B cell (primary cell): ENCODE measurements at regions of chr1 and their contacts with region 1.

Region 1: GRCh38 chr1:229685149-229685548 is 59.1 kb downstream of the URB2 start:
- DNase-seq: no peak
- ATAC-seq: no peak
- H3K4me3 ChIP-seq: no peak overlapping the region
- H3K4me3 Mint-ChIP-seq: no peak overlapping the region
- H3K27ac ChIP-seq: no peak overlapping the region
- H3K27ac Mint-ChIP-seq: no peak overlapping the region
- H3K4me1 ChIP-seq: no peaks in the 10 kb centered on the region
- H3K4me1 Mint-ChIP-seq: no peaks in the 10 kb centered on the region
- H3K27me3 ChIP-seq: no peaks in the 10 kb centered on the region
- H3K27me3 Mint-ChIP-seq: no peaks in the 10 kb centered on the region
- CTCF ChIP-seq: no peak

Region 2: DNA sequence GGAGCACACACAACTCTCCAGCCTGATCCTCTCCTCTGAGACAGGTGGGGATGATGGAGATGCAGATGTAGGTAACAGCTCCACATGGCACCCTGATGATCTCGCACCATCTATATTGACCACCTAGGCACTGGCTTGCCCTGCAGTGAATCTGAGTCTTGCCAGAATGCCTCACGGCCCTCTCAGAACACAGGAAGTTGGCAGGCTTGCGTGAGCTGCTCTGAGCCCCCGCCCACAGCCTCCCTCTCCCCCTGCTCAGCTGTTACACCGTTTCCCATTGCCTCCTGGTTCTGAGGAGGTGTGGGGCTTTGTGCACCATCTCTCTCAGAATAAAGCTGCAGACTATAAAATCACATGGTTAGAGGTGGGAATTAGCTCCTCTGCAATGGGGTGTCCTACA is 11.1 kb before region 1 on chr1:
- CTCF ChIA-PET with region 1: interaction called, 4 read pairs
- POLR2A ChIA-PET with region 1: no interaction called
- intact Hi-C with region 1: loop called (anchors 1 kb)
- DNase-seq: no peak
- ATAC-seq: no peak
- H3K4me3 ChIP-seq: no peak overlapping the region
- H3K4me3 Mint-ChIP-seq: no peak overlapping the region
- H3K27ac ChIP-seq: no peak overlapping the region
- H3K27ac Mint-ChIP-seq: no peak overlapping the region
- H3K4me1 ChIP-seq: no peaks in the 10 kb centered on the region
- H3K4me1 Mint-ChIP-seq: no peaks in the 10 kb centered on the region
- H3K27me3 ChIP-seq: no peaks in the 10 kb centered on the region
- H3K27me3 Mint-ChIP-seq: no peaks in the 10 kb centered on the region
- CTCF ChIP-seq: no peak

Region 3: GRCh38 chr1:229887043-229887822 is 202.1 kb after region 1 on chr1:
- CTCF ChIA-PET with region 1: no interaction called
- POLR2A ChIA-PET with region 1: no interaction called
- intact Hi-C with region 1: no loop called
- DNase-seq: no peak
- ATAC-seq: no peak
- H3K4me3 ChIP-seq: no peak overlapping the region
- H3K4me3 Mint-ChIP-seq: no peak overlapping the region
- H3K27ac ChIP-seq: no peak overlapping the region
- H3K27ac Mint-ChIP-seq: no peak overlapping the region
- H3K4me1 ChIP-seq: no peaks in the 10 kb centered on the region
- H3K4me1 Mint-ChIP-seq: no peaks in the 10 kb centered on the region
- H3K27me3 ChIP-seq: no peaks in the 10 kb centered on the region
- H3K27me3 Mint-ChIP-seq: peaks cover 26% of the 10 kb centered on the region
- CTCF ChIP-seq: no peak